IMR-90 (cell line): ENCODE measurements at regions of chr19 and their contacts with region 1.

Region 1: GRCh38 chr19:2900296-2901252 is at the start of gene ZNF57:
- DNase-seq: peak; percentile 98
- ATAC-seq: peak; percentile 99
- H3K4me3 ChIP-seq: peak within 1 kb of the TSS; percentile 93
- H3K27ac ChIP-seq: peak within 1 kb of the TSS; percentile 74
- H3K4me1 ChIP-seq: no peaks in the 10 kb centered on the region; the same call in 1 of the 2 replicates
- H3K27me3 ChIP-seq: no peaks in the 10 kb centered on the region
- CTCF ChIP-seq: no peak
- POLR2A ChIP-seq: no peak
- RAD21 ChIP-seq: no peak
- total RNA-seq, gene ZNF57: 6.1 and 8.6 TPM in 2 replicates

Region 2: DNA sequence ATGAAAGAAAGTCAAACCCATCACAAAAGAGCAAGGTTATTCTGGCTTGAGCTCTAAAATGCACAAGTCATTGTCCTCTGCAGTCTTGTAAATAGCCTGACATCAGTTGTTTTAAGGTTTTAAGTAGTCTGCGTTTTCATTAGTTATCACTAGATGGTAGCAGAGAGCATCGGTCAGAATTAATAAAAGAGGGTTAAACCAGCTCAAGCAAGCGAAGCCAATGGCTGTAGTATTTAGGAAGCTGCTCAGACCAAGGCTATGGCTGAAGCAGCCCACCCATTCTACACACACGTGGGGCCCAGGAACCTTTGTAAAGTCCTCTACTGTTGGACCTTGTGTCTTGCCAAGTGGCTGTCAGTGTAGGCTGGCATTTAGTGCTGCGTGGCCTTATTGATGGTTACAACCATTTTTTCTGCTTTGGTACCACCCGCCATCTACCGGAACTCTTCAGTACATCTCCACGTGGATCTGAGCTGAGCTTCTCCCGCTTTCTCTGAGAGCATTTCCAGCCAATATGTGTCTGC is 13.1 kb before region 1 on chr19:
- CTCF ChIA-PET with region 1: interaction called, 10 read pairs
- POLR2A ChIA-PET with region 1: no interaction called
- dilution Hi-C with region 1: no loop called
- in situ Hi-C with region 1: no loop called
- intact Hi-C with region 1: no loop called
- DNase-seq: peak; percentile 61
- ATAC-seq: peak; percentile 99
- H3K4me3 ChIP-seq: no peak overlapping the region
- H3K27ac ChIP-seq: no peak overlapping the region
- H3K4me1 ChIP-seq: no peaks in the 10 kb centered on the region
- H3K27me3 ChIP-seq: no peaks in the 10 kb centered on the region
- CTCF ChIP-seq: peak; percentile 62
- POLR2A ChIP-seq: no peak
- RAD21 ChIP-seq: peak; percentile 46

Region 3: GRCh38 chr19:2944775-2945574 is 44.4 kb after region 1 on chr19 and contains the start of gene ZNF77:
- CTCF ChIA-PET with region 1: no interaction called
- POLR2A ChIA-PET with region 1: no interaction called
- dilution Hi-C with region 1: no loop called
- in situ Hi-C with region 1: no loop called
- intact Hi-C with region 1: loop called (anchors 2 kb)
- DNase-seq: peak; percentile 99
- ATAC-seq: peak; percentile 99
- H3K4me3 ChIP-seq: peak within 1 kb of the TSS; percentile 87
- H3K27ac ChIP-seq: peak within 1 kb of the TSS; percentile 82
- H3K4me1 ChIP-seq: peaks cover 5% of the 10 kb centered on the region; the same call in 1 of the 2 replicates
- H3K27me3 ChIP-seq: no peaks in the 10 kb centered on the region
- CTCF ChIP-seq: no peak
- POLR2A ChIP-seq: peak; percentile 49; the same call in 1 of the 2 replicates
- RAD21 ChIP-seq: no peak
- total RNA-seq, gene ZNF77: 5.3 and 6.5 TPM in 2 replicates